CD4-positive, alpha-beta T cell (primary cell): ENCODE measurements at regions of chr4 and their contacts with region 1.

Region 1: GRCh38 chr4:120071192-120071795 is 4.6 kb upstream of the MAD2L1 start:
- DNase-seq: peak in 11 of 14 experiments; percentile 9 to 83 (median 43)
- ATAC-seq: no peak
- H3K4me3 ChIP-seq: no peak overlapping the region
- H3K4me3 Mint-ChIP-seq: no peak overlapping the region
- H3K27ac ChIP-seq: no peak overlapping the region
- H3K27ac Mint-ChIP-seq: no peak overlapping the region
- H3K4me1 ChIP-seq: peaks cover 10% of the 10 kb centered on the region
- H3K4me1 Mint-ChIP-seq: peaks cover 37% of the 10 kb centered on the region
- H3K27me3 ChIP-seq: no peaks in the 10 kb centered on the region
- H3K27me3 Mint-ChIP-seq: no peaks in the 10 kb centered on the region
- CTCF ChIP-seq: peak; percentile 91

Region 2: DNA sequence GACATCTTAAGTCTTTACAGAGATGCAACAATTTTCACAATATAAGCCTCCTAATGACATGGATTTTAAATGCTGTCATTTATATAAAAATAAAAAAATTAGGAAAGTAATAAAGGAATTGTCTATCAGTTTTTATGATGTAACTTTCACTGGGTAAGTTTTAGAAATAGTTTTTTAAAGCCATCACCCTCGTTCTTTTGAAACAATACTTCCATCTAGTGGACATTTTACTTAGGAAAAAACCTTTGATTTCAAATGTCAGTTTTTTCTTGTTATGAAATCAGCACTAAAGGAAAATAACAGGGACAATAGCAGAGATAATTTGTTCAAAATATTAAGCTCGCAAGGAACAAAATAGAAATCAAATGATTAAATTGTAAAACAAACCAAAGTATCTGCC is 1025.3 kb after region 1 on chr4:
- CTCF ChIA-PET with region 1: no interaction called
- POLR2A ChIA-PET with region 1: no interaction called
- intact Hi-C with region 1: loop called (anchors 1 to 2 kb)
- DNase-seq: peak in 3 of 14 experiments; percentile 38 to 52 (median 41)
- ATAC-seq: no peak
- H3K4me3 ChIP-seq: no peak overlapping the region
- H3K4me3 Mint-ChIP-seq: no peak overlapping the region
- H3K27ac ChIP-seq: no peak overlapping the region
- H3K27ac Mint-ChIP-seq: no peak overlapping the region
- H3K4me1 ChIP-seq: no peaks in the 10 kb centered on the region
- H3K4me1 Mint-ChIP-seq: no peaks in the 10 kb centered on the region
- H3K27me3 ChIP-seq: no peaks in the 10 kb centered on the region
- H3K27me3 Mint-ChIP-seq: no peaks in the 10 kb centered on the region
- CTCF ChIP-seq: peak; percentile 77

Region 3: GRCh38 chr4:121252224-121252806 is 1181.0 kb after region 1 on chr4:
- CTCF ChIA-PET with region 1: no interaction called
- POLR2A ChIA-PET with region 1: no interaction called
- intact Hi-C with region 1: loop called (anchors 5 to 10 kb)
- DNase-seq: peak; percentile 21 to 78 (median 44)
- ATAC-seq: peak; percentile 27
- H3K4me3 ChIP-seq: no peak overlapping the region
- H3K4me3 Mint-ChIP-seq: no peak overlapping the region
- H3K27ac ChIP-seq: no peak overlapping the region
- H3K27ac Mint-ChIP-seq: no peak overlapping the region
- H3K4me1 ChIP-seq: peaks cover 35% of the 10 kb centered on the region
- H3K4me1 Mint-ChIP-seq: peaks cover 54% of the 10 kb centered on the region
- H3K27me3 ChIP-seq: no peaks in the 10 kb centered on the region
- H3K27me3 Mint-ChIP-seq: no peaks in the 10 kb centered on the region
- CTCF ChIP-seq: peak; percentile 76

Region 4: GRCh38 chr4:121307445-121308327 is 1236.4 kb after region 1 on chr4:
- CTCF ChIA-PET with region 1: no interaction called
- POLR2A ChIA-PET with region 1: no interaction called
- intact Hi-C with region 1: loop called in 1 of 2 experiments (anchors 5 kb)
- DNase-seq: peak in 10 of 14 experiments; percentile 2 to 77 (median 26)
- ATAC-seq: no peak
- H3K4me3 ChIP-seq: no peak overlapping the region
- H3K4me3 Mint-ChIP-seq: no peak overlapping the region
- H3K27ac ChIP-seq: no peak overlapping the region
- H3K27ac Mint-ChIP-seq: no peak overlapping the region
- H3K4me1 ChIP-seq: peaks cover 5% of the 10 kb centered on the region
- H3K4me1 Mint-ChIP-seq: peaks cover 15% of the 10 kb centered on the region
- H3K27me3 ChIP-seq: no peaks in the 10 kb centered on the region
- H3K27me3 Mint-ChIP-seq: peaks cover 4% of the 10 kb centered on the region
- CTCF ChIP-seq: peak; percentile 81

Region 5: DNA sequence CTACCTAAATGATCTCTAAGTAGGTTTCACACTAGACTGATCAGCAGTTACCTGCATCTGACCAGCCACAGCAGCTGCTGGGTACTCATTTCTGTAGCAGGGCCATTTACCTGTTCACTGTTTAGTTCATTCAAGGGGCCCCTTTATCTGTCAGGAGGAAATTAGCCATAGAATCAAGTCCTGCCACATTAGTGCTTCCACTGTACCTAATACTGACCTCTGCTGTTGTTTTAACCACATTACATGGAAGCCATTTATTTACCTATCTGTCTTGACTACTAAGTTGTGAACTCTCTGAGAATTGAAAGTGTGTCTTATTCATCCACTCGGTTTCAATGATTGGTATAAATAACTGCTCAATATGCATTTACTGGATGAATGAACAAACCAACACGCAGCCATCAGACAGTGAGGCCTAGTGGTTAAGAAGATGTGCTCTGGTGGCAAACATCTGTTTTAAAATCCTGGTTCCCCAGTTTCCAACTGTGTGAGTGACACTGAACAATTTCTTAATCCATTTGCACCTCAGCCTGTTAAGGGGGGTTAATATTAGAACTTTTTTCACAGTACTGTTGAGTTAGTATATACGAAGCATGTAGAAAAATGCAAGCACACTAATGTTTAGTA is 1655.5 kb after region 1 on chr4:
- CTCF ChIA-PET with region 1: no interaction called
- POLR2A ChIA-PET with region 1: no interaction called
- intact Hi-C with region 1: loop called (anchors 2 to 5 kb)
- DNase-seq: peak in 3 of 14 experiments; percentile 66 to 68 (median 67)
- ATAC-seq: peak; percentile 85
- H3K4me3 ChIP-seq: no peak overlapping the region
- H3K4me3 Mint-ChIP-seq: no peak overlapping the region
- H3K27ac ChIP-seq: no peak overlapping the region
- H3K27ac Mint-ChIP-seq: no peak overlapping the region
- H3K4me1 ChIP-seq: no peaks in the 10 kb centered on the region
- H3K4me1 Mint-ChIP-seq: no peaks in the 10 kb centered on the region
- H3K27me3 ChIP-seq: no peaks in the 10 kb centered on the region
- H3K27me3 Mint-ChIP-seq: no peaks in the 10 kb centered on the region
- CTCF ChIP-seq: peak; percentile 69